Right lobe of liver (tissue), 6 donors: ENCODE measurements at regions of chr17 and their contacts with region 1.

Region 1: DNA sequence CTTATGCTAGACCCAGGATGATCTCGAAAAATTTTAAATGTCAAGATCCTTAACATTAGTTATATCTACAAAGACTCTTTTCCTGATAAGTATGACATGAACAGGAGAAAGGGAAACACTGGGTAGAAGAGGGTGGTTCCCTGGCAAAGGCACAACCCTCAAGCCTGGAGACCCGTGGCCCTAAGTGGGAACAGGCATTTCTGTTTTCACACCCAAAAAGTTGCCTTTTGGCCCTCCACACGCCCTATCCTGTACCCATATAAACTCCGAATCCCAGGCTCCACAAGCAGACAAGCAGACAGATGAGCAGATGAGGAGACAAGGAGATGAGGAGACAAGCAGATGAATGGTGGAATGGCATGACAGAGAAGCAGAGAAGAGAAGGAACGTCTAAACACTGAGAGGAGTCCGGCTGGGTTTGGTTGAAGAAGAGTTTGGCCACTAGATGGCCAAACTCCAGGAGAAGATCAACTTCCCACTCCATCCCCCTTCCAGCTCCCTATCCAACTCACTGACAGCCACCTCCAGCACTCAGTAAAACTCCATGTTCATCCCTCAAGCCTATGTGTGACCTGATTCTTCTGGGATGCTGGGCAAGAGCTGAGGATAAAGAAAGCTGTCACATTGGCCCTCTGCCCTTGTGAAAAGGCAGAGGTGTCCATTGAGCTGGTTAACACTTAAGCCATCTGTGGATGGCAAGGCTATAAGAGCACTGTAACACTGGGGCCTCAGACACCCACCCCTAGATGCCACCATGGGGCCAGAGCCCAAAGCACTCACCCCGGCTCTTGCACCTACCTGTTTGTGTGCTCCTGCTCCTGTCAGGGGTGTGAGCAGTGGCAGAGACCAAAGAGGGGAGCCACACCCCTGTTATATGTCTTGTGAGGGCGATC is 139.6 kb upstream of the FAM20A start:
- DNase-seq: no peak
- ATAC-seq: peak in 3 of 4 donors; percentile 20 to 46 (median 28)
- H3K4me3 ChIP-seq: no peak overlapping the region
- H3K27ac ChIP-seq: no peak overlapping the region
- H3K4me1 ChIP-seq: peaks cover 0 to 5% (median 0%) of the 10 kb centered on the region in 4 donors
- H3K27me3 ChIP-seq: no peaks in the 10 kb centered on the region
- CTCF ChIP-seq: peak in 1 of 4 donors; percentile 24
- POLR2A ChIP-seq: no peak

Region 2: DNA sequence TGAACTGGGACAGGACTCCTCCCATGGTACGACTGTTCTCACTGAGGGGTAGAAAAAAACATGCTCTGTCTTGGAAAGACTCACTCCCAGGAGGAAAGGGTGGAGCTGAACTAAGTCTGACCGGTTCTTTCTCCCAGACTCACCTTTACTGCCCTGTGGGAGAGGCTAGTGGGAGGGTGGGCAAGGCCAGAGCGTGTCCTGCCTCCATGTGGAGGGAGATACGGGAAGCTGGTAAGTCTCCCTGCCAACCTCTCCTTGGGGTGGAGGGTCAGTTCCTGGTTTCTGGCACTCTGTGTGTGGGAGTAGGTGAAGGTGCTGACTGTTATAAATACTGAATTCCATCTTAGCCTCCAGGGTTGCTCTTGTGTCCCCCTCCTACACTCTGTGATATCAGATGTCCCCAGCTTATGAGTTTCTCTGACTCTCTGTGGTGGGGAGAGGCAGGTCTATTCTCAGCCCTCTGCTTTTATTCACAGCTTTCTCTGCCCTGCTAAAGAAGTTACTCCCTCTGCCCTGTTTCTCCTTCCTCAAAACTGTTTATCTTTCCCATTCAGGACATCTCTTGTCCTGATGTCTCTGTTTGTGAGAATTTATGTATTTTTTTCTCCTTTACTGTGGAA is 112.7 kb before region 1 on chr17:
- intact Hi-C with region 1: loop called in 1 of 2 experiments (anchors 10 kb)
- DNase-seq: no peak
- ATAC-seq: peak; percentile 16 to 31 (median 25)
- H3K4me3 ChIP-seq: no peak overlapping the region
- H3K27ac ChIP-seq: no peak overlapping the region
- H3K4me1 ChIP-seq: no peaks in the 10 kb centered on the region
- H3K27me3 ChIP-seq: no peaks in the 10 kb centered on the region
- CTCF ChIP-seq: no peak
- POLR2A ChIP-seq: no peak

Region 3: DNA sequence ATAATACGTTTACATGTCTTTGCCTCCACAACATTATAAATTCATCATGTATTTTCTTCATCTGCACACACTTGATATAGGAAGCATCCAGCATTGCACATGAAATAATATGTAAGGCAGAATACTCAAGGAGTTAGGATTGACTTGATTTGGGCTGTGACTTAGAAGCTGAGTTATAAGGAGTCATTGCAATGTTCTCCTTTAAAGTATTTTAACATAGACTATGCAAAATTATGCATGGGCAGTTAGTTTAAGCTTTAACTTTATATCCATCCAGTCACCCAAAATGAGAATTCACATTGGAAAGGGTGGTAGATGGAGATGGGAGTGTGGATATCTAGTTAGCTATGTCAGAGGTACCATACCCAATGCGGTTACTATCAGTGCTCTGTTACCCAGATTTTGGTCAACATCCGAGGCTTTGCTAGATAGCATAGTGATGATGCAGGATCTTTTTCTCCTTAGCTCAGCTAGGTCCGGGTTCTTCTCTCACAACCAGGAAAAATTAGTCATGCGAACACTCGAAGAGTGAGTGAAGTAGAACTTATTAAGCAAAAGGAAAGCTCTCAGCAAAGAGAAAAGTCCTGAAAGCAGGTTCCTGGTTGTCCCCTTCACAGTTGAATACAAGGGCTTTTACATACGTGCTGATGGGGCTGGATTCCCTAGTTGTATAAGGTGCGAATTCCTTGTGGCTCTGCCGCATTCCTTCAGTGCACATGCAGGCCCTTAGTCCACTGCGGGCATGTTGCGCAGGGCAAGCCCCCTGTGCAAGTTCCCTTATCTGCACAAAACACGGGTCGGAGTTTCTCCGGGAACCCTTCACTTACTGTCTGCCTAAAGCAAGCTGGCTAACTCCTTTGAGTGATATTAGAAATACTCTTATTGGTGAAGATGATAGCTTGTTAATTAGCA is 66.5 kb before region 1 on chr17:
- intact Hi-C with region 1: loop called in 1 of 2 experiments (anchors 10 kb)
- DNase-seq: no peak
- ATAC-seq: no peak
- H3K4me3 ChIP-seq: no peak overlapping the region
- H3K27ac ChIP-seq: no peak overlapping the region
- H3K4me1 ChIP-seq: no peaks in the 10 kb centered on the region
- H3K27me3 ChIP-seq: no peaks in the 10 kb centered on the region
- CTCF ChIP-seq: no peak
- POLR2A ChIP-seq: no peak